Naive thymus-derived CD4-positive, alpha-beta T cell (primary cell): ENCODE measurements at regions of chr12 and their contacts with region 1.

Region 1: DNA sequence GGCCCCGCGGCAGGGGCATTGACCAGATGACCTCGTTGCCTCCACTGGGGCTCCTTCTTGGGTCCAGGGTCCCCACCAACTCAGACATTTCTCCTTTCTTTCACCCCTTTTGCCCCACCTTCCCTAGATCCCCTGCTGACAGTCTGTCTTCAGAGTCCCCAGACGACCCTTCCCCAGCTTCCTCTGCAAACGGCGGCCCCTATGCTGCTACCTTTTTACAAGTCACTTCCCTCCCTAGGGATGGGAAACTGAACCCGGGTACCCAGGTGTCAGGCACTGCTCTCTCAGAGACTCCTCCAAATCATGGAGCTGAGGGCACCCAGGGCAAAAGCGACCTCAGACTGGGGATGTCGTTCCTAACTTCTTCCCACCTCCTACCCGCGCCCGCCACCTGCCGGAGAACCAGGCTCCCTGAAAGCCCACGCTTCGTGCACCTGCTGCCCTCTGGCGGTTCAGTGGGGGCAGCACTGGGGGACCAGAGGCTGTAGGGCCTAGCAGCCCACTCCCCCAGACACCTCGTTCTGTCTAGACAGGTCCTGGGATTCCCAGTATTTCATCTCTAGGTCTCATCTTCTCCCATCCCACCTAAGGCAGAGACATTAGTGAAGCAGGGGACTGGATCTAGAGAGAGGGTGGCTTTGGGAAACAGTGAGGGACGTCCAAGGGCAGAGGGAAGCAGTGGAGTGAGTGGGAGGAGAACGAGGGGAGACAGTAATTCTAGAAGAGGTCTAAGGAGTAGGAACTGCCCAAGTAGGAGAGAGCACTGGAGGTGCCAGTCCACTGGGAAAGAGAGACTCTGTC is 4.9 kb downstream of the ZNF385A start:
- DNase-seq: peak; percentile 73 to 93 (median 84)
- ATAC-seq: peak; percentile 87
- H3K4me3 ChIP-seq: no peak overlapping the region
- H3K4me3 Mint-ChIP-seq: peak overlapping the region; percentile 43 to 79 (median 59)
- H3K27ac ChIP-seq: no peak overlapping the region
- H3K27ac Mint-ChIP-seq: peak overlapping the region in 3 of 9 donors; percentile 0 to 46 (median 38)
- H3K4me1 ChIP-seq: peaks cover 0 to 3% of the 10 kb centered on the region in 2 donors
- H3K4me1 Mint-ChIP-seq: peaks cover 6 to 19% (median 6%) of the 10 kb centered on the region in 7 donors
- H3K27me3 ChIP-seq: no peaks in the 10 kb centered on the region
- H3K27me3 Mint-ChIP-seq: peaks cover 0 to 5% (median 0%) of the 10 kb centered on the region in 5 donors

Region 2: GRCh38 chr12:53575502-53576253 is 803.9 kb before region 1 on chr12:
- CTCF ChIA-PET with region 1: no interaction called
- POLR2A ChIA-PET with region 1: no interaction called
- intact Hi-C with region 1: no loop called
- DNase-seq: no peak
- ATAC-seq: peak; percentile 69
- H3K4me3 ChIP-seq: no peak overlapping the region
- H3K4me3 Mint-ChIP-seq: no peak overlapping the region
- H3K27ac ChIP-seq: no peak overlapping the region
- H3K27ac Mint-ChIP-seq: no peak overlapping the region
- H3K4me1 ChIP-seq: peaks cover 5 to 6% of the 10 kb centered on the region in 2 donors
- H3K4me1 Mint-ChIP-seq: peaks cover 5 to 42% (median 32%) of the 10 kb centered on the region in 7 donors
- H3K27me3 ChIP-seq: no peaks in the 10 kb centered on the region
- H3K27me3 Mint-ChIP-seq: no peaks in the 10 kb centered on the region

Region 3: DNA sequence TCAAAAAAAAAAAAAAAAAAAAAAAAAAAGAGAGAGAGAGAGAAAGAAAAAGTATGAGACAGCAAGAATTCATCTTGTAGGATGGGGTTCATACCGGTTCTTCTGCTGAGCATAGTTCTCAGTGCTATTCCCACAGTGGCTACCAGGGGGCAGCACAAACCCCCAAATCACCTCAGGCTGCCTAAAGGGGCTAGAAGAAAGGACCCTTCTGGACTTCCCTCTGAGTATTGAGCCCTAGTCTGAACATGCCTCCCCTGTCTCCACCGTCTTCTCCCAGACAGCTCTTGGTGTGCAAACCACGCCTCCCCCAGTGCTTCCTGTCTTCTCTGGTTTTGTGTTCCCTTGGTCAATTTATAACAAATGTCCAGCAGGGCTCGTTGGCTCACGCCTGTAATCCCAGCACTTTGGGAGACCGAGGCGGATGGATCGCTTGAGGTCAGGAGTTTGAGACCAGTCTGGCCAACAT is 159.5 kb before region 1 on chr12:
- CTCF ChIA-PET with region 1: interaction called, 4 read pairs
- POLR2A ChIA-PET with region 1: no interaction called
- intact Hi-C with region 1: loop called in 1 of 2 experiments (anchors 1 kb)
- DNase-seq: peak; percentile 37 to 65 (median 58)
- ATAC-seq: peak; percentile 74
- H3K4me3 ChIP-seq: no peak overlapping the region
- H3K4me3 Mint-ChIP-seq: peak overlapping the region in 2 of 10 donors; percentile 12 to 31
- H3K27ac ChIP-seq: no peak overlapping the region
- H3K27ac Mint-ChIP-seq: no peak overlapping the region
- H3K4me1 ChIP-seq: peaks cover 23 to 25% of the 10 kb centered on the region in 2 donors
- H3K4me1 Mint-ChIP-seq: peaks cover 18 to 42% (median 28%) of the 10 kb centered on the region in 7 donors
- H3K27me3 ChIP-seq: no peaks in the 10 kb centered on the region
- H3K27me3 Mint-ChIP-seq: peaks cover 0 to 19% (median 4%) of the 10 kb centered on the region in 5 donors

Region 4: DNA sequence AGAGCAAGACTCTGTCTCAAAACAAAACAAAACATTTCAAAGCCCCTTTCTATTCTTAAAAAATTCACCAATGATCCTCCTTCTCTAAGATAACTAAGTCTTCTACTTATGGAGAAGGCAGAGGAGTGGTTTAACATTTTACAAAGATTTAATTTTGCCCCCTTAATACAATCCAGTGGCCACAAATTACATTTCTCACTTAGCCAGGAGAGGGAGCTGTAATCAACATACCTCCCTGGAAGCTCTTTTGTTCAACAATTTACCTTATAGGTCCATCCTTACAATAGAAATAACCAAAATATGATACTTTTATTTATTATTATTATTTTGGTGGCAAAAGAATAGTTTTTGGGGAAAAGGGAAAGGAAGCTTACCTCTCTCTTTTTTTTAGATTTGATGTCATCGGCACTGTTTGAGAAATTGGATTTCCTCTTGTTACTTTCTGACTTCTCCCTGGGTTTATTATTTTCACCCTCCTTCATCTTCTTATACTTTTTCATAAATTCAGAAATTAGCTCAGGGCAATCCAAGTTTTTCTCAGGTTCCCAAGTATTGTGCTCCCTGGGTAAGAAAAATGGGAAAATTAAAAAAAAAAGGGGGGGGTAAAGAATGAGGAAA is 127.8 kb before region 1 on chr12:
- CTCF ChIA-PET with region 1: interaction called, 8 read pairs
- POLR2A ChIA-PET with region 1: no interaction called
- intact Hi-C with region 1: loop called in 1 of 2 experiments (anchors 1 kb)
- DNase-seq: peak in 7 of 9 donors; percentile 9 to 54 (median 47)
- ATAC-seq: peak; percentile 75
- H3K4me3 ChIP-seq: no peak overlapping the region
- H3K4me3 Mint-ChIP-seq: peak overlapping the region in 1 of 10 donors; percentile 18
- H3K27ac ChIP-seq: no peak overlapping the region
- H3K27ac Mint-ChIP-seq: peak overlapping the region in 2 of 9 donors; percentile 48 to 76
- H3K4me1 ChIP-seq: no peaks in the 10 kb centered on the region
- H3K4me1 Mint-ChIP-seq: peaks cover 7 to 23% (median 17%) of the 10 kb centered on the region in 7 donors
- H3K27me3 ChIP-seq: no peaks in the 10 kb centered on the region
- H3K27me3 Mint-ChIP-seq: no peaks in the 10 kb centered on the region

Region 5: GRCh38 chr12:54337280-54337842 is 42.2 kb before region 1 on chr12:
- CTCF ChIA-PET with region 1: interaction called, 6 read pairs
- POLR2A ChIA-PET with region 1: no interaction called
- intact Hi-C with region 1: loop called in 1 of 2 experiments (anchors 1 kb)
- DNase-seq: no peak
- ATAC-seq: no peak
- H3K4me3 ChIP-seq: no peak overlapping the region
- H3K4me3 Mint-ChIP-seq: no peak overlapping the region
- H3K27ac ChIP-seq: no peak overlapping the region
- H3K27ac Mint-ChIP-seq: peak overlapping the region in 2 of 9 donors; percentile 19 to 25
- H3K4me1 ChIP-seq: peaks cover 4 to 13% of the 10 kb centered on the region in 2 donors
- H3K4me1 Mint-ChIP-seq: peaks cover 7 to 66% (median 32%) of the 10 kb centered on the region in 7 donors
- H3K27me3 ChIP-seq: no peaks in the 10 kb centered on the region
- H3K27me3 Mint-ChIP-seq: no peaks in the 10 kb centered on the region

Region 6: GRCh38 chr12:54393207-54393609 is 13.6 kb after region 1 on chr12:
- CTCF ChIA-PET with region 1: interaction called, 20 read pairs
- POLR2A ChIA-PET with region 1: no interaction called
- intact Hi-C with region 1: no loop called
- DNase-seq: no peak
- ATAC-seq: no peak
- H3K4me3 ChIP-seq: no peak overlapping the region
- H3K4me3 Mint-ChIP-seq: no peak overlapping the region
- H3K27ac ChIP-seq: no peak overlapping the region
- H3K27ac Mint-ChIP-seq: peak overlapping the region in 1 of 9 donors; percentile 20
- H3K4me1 ChIP-seq: peaks cover 4 to 5% of the 10 kb centered on the region in 2 donors
- H3K4me1 Mint-ChIP-seq: peaks cover 28 to 46% (median 32%) of the 10 kb centered on the region in 7 donors
- H3K27me3 ChIP-seq: no peaks in the 10 kb centered on the region
- H3K27me3 Mint-ChIP-seq: no peaks in the 10 kb centered on the region

Region 7: GRCh38 chr12:54398995-54399793 is 19.6 kb after region 1 on chr12:
- CTCF ChIA-PET with region 1: interaction called, 20 read pairs
- POLR2A ChIA-PET with region 1: no interaction called
- intact Hi-C with region 1: no loop called
- DNase-seq: peak; percentile 76 to 94 (median 84)
- ATAC-seq: peak; percentile 96
- H3K4me3 ChIP-seq: no peak overlapping the region
- H3K4me3 Mint-ChIP-seq: no peak overlapping the region
- H3K27ac ChIP-seq: no peak overlapping the region
- H3K27ac Mint-ChIP-seq: peak overlapping the region in 7 of 9 donors; percentile 5 to 74 (median 52)
- H3K4me1 ChIP-seq: no peaks in the 10 kb centered on the region
- H3K4me1 Mint-ChIP-seq: peaks cover 13 to 31% (median 16%) of the 10 kb centered on the region in 7 donors
- H3K27me3 ChIP-seq: no peaks in the 10 kb centered on the region
- H3K27me3 Mint-ChIP-seq: no peaks in the 10 kb centered on the region

Region 8: GRCh38 chr12:54439521-54440255 is 60.1 kb after region 1 on chr12:
- CTCF ChIA-PET with region 1: interaction called, 31 read pairs
- POLR2A ChIA-PET with region 1: no interaction called
- intact Hi-C with region 1: loop called in 1 of 2 experiments (anchors 1 kb)
- DNase-seq: peak in 7 of 9 donors; percentile 24 to 68 (median 62)
- ATAC-seq: peak; percentile 97
- H3K4me3 ChIP-seq: no peak overlapping the region
- H3K4me3 Mint-ChIP-seq: peak overlapping the region in 2 of 10 donors; percentile 14 to 21
- H3K27ac ChIP-seq: no peak overlapping the region
- H3K27ac Mint-ChIP-seq: peak overlapping the region in 7 of 9 donors; percentile 9 to 78 (median 29)
- H3K4me1 ChIP-seq: peaks cover 0 to 3% of the 10 kb centered on the region in 2 donors
- H3K4me1 Mint-ChIP-seq: peaks cover 4 to 24% (median 6%) of the 10 kb centered on the region in 7 donors
- H3K27me3 ChIP-seq: no peaks in the 10 kb centered on the region
- H3K27me3 Mint-ChIP-seq: peaks cover 0 to 32% (median 0%) of the 10 kb centered on the region in 5 donors

Region 9: GRCh38 chr12:54475537-54475936 is 95.9 kb after region 1 on chr12:
- CTCF ChIA-PET with region 1: no interaction called
- POLR2A ChIA-PET with region 1: no interaction called
- intact Hi-C with region 1: no loop called
- DNase-seq: no peak
- ATAC-seq: no peak
- H3K4me3 ChIP-seq: no peak overlapping the region
- H3K4me3 Mint-ChIP-seq: no peak overlapping the region
- H3K27ac ChIP-seq: no peak overlapping the region
- H3K27ac Mint-ChIP-seq: no peak overlapping the region
- H3K4me1 ChIP-seq: no peaks in the 10 kb centered on the region
- H3K4me1 Mint-ChIP-seq: peaks cover 0 to 4% (median 0%) of the 10 kb centered on the region in 7 donors
- H3K27me3 ChIP-seq: no peaks in the 10 kb centered on the region
- H3K27me3 Mint-ChIP-seq: peaks cover 0 to 45% (median 0%) of the 10 kb centered on the region in 5 donors